K562 (cell line): ENCODE measurements at regions of chr4 and their contacts with region 1.

Region 1: DNA sequence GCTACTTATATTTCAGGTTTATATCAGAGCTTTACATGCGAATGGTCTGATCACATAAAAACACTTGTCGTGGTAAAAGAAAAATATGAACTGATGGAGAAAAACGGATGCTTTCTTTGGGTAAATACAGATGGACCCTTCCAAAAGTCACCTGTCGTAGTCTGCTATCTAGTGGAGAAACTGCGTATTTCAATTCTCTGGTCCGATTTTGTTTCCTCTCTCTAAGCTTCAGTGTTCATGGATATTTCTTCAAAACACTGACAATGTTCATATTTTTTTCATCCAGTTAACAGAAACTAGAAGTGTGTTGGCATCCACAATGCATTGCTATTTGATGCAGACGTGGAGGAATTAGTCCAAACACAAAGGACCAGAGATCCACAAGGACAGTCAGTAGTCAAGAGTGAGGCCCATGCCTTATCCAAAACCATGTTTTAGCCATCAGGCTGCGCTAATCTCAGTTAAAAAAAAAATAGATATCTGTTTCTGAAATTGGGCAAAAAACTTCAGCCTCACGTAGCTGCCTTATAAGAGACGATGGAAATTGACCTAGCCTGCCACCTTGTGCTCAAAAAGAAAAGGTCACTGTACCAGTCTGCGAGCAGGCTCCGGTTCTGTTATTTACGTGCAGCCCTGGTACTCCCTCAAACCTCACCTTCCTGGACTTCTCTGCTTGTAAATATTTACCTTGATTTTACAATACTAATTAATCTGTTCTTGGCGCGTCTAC is 16.0 kb downstream of the MEPE start:
- DNase-seq: peak; percentile 37 to 59 (median 42)
- ATAC-seq: peak; percentile 97
- H3K4me3 ChIP-seq: no peak overlapping the region
- H3K27ac ChIP-seq: no peak overlapping the region
- H3K4me1 ChIP-seq: peaks cover 0 to 7% of the 10 kb centered on the region in 2 experiments; a peak in 1 of 5 replicates
- H3K27me3 ChIP-seq: 0 out of 5 replicates have a peak, but pooled peaks cover 0 to 3% of the 10 kb centered on the region in 2 experiments
- CTCF ChIP-seq: peak; percentile 60 to 64 (median 63); a peak in 5 of 6 replicates
- EP300 ChIP-seq: no peak
- POLR2A ChIP-seq: no peak
- RAD21 ChIP-seq: peak; percentile 26 to 45

Region 2: GRCh38 chr4:86895692-86896488 is 952.9 kb before region 1 on chr4:
- CTCF ChIA-PET with region 1: interaction called, 7 read pairs
- POLR2A ChIA-PET with region 1: no interaction called
- in situ Hi-C with region 1: loop called (anchors 10 kb)
- intact Hi-C with region 1: no loop called
- DNase-seq: peak; percentile 46 to 72 (median 50)
- ATAC-seq: peak; percentile 62
- H3K4me3 ChIP-seq: no peak overlapping the region
- H3K27ac ChIP-seq: no peak overlapping the region
- H3K4me1 ChIP-seq: peaks cover 6 to 10% of the 10 kb centered on the region in 2 experiments; a peak in 3 of 5 replicates
- H3K27me3 ChIP-seq: no peaks in the 10 kb centered on the region; a peak in 2 of 5 replicates
- CTCF ChIP-seq: peak; percentile 65 to 85 (median 69); a peak in 5 of 6 replicates
- EP300 ChIP-seq: no peak
- POLR2A ChIP-seq: no peak
- RAD21 ChIP-seq: peak; percentile 80 to 89

Region 3: DNA sequence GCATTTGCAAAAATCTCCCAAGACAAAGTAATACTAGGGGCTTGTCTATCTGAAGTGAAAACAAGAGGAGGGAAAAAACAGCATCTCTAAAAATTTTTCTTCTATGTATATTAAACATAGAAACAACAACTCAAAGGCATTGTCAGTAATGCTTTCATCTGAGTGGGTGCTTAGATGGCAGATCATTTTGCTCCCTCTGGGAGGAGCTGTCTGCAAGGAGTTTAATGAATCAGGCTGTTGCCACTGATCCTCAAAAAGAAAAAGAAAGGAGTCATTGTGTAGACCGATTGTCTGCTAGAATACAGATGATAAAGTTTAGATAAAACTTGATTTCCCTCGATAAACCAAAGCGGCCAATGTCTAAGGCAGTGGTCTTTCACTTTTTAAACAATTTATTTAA is 578.6 kb before region 1 on chr4:
- CTCF ChIA-PET with region 1: interaction called, 3 read pairs
- POLR2A ChIA-PET with region 1: no interaction called
- in situ Hi-C with region 1: loop called (anchors 10 kb)
- intact Hi-C with region 1: loop called (anchors 1 kb)
- DNase-seq: peak; percentile 16 to 53 (median 30)
- ATAC-seq: peak; percentile 91
- H3K4me3 ChIP-seq: no peak overlapping the region
- H3K27ac ChIP-seq: no peak overlapping the region
- H3K4me1 ChIP-seq: no peaks in the 10 kb centered on the region
- H3K27me3 ChIP-seq: peaks cover 7 to 16% of the 10 kb centered on the region in 2 experiments
- CTCF ChIP-seq: peak; percentile 52 to 81 (median 69)
- EP300 ChIP-seq: no peak
- POLR2A ChIP-seq: no peak
- RAD21 ChIP-seq: peak; percentile 75 to 84

Region 4: GRCh38 chr4:87679449-87680169 is 169.2 kb before region 1 on chr4:
- CTCF ChIA-PET with region 1: interaction called, 20 read pairs
- POLR2A ChIA-PET with region 1: no interaction called
- in situ Hi-C with region 1: loop called (anchors 5 kb)
- intact Hi-C with region 1: no loop called
- DNase-seq: peak; percentile 42 to 67 (median 58)
- ATAC-seq: peak; percentile 77
- H3K4me3 ChIP-seq: no peak overlapping the region
- H3K27ac ChIP-seq: no peak overlapping the region
- H3K4me1 ChIP-seq: no peaks in the 10 kb centered on the region
- H3K27me3 ChIP-seq: no peaks in the 10 kb centered on the region; a peak in 1 of 5 replicates
- CTCF ChIP-seq: peak; percentile 79 to 86 (median 81)
- EP300 ChIP-seq: no peak
- POLR2A ChIP-seq: no peak
- RAD21 ChIP-seq: peak; percentile 72 to 80

Region 5: GRCh38 chr4:87973283-87974169 is 124.7 kb after region 1 on chr4:
- CTCF ChIA-PET with region 1: interaction called, 11 read pairs
- POLR2A ChIA-PET with region 1: no interaction called
- in situ Hi-C with region 1: loop called (anchors 10 kb)
- intact Hi-C with region 1: loop called (anchors 1 kb)
- DNase-seq: peak; percentile 30 to 47 (median 38)
- ATAC-seq: peak; percentile 89
- H3K4me3 ChIP-seq: no peak overlapping the region
- H3K27ac ChIP-seq: no peak overlapping the region
- H3K4me1 ChIP-seq: no peaks in the 10 kb centered on the region
- H3K27me3 ChIP-seq: peaks cover 4% of the 10 kb centered on the region in 2 experiments; a peak in 1 of 5 replicates
- CTCF ChIP-seq: peak; percentile 59 to 71 (median 69)
- EP300 ChIP-seq: no peak
- POLR2A ChIP-seq: no peak
- RAD21 ChIP-seq: peak; percentile 53 to 63

Region 6: DNA sequence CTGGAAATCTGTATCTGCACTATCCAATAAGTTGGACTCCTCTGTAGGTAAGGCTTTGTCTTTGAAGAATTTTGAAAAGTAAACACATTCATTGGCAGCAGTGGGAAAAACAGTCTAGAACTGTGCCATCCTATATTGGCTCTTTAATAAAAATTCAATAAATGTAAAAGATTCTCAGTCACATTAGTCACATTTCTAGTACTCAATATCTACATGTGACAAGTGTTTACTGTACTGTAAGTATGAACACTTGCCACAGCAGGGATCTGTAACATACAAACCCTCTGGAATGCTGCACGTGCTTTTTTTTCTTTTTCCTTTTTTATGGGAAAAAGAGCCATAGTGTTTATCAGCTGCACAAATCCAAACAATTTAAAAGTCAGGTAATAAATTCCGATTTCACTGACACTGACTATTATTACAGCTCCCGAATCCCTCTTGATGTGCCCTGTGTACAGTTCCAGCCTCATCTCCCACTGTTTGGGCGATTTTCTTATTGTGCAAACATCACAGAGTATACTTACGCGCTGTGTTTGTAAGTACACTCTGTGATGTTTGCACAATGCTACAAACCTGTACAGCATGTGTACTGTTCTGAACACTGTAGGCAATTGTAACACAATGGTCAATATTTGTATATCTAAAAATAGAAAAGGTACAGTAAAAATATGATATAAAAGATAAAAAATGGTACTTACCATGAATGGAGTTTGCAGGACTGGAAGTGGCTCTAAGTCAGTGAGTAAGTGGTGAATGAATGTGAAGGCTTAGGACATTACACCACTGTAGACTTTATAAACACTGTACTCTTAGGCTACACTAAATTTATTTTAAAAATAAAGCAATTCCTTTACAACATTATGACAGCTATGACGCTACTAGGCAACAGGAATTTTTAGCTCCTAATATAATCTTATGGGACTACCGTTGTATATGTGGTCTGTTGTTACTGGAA is 666.0 kb after region 1 on chr4:
- CTCF ChIA-PET with region 1: no interaction called
- POLR2A ChIA-PET with region 1: no interaction called
- in situ Hi-C with region 1: loop called (anchors 10 kb)
- intact Hi-C with region 1: loop called (anchors 5 kb)
- DNase-seq: no peak
- ATAC-seq: no peak
- H3K4me3 ChIP-seq: no peak overlapping the region
- H3K27ac ChIP-seq: no peak overlapping the region
- H3K4me1 ChIP-seq: peaks cover 3 to 6% of the 10 kb centered on the region in 2 experiments; a peak in 3 of 5 replicates
- H3K27me3 ChIP-seq: 0 out of 5 replicates have a peak, but pooled peaks cover 0 to 3% of the 10 kb centered on the region in 2 experiments
- CTCF ChIP-seq: no peak
- EP300 ChIP-seq: no peak
- POLR2A ChIP-seq: no peak
- RAD21 ChIP-seq: no peak